ENCODE measurements at regions of chr6 and their contacts with region 1.

Region 1: DNA sequence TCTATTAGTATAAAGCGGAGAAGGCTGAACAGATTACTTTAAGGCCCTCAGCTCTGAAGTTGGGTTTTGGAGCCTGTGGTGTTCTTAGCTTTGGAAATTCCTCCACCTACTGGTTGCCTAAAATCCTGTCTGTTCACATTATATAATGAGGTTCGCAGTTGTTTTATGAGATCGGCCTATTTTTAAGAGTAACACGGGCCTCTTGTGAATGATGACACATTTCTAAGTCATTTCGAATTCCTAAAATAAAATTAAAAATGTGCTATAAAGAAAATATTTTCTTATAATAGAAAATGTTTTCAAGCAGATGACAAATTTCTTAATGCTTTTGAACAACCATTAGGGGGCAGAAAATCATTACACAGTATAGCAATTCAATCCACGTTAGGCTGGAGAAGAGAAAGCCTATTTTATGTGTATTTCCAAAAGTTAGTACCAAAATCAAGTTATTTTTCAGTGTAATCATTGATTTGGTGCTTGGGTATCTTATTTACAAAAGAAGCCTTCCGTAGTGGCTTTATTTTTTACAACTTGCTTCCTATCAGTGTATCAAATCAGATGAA is 15.8 kb upstream of the FAM8A1 start:
- DNase-seq: peak; percentile 37
- H3K4me3 ChIP-seq: no peak overlapping the region
- H3K27me3 ChIP-seq: no peaks in the 10 kb centered on the region
- CTCF ChIP-seq: peak; percentile 66

Region 2: GRCh38 chr6:17156112-17156921 is 428.0 kb before region 1 on chr6:
- CTCF ChIA-PET with region 1: interaction called, 17 read pairs
- POLR2A ChIA-PET with region 1: no interaction called
- DNase-seq: peak; percentile 39
- H3K4me3 ChIP-seq: no peak overlapping the region
- H3K27me3 ChIP-seq: no peaks in the 10 kb centered on the region
- CTCF ChIP-seq: peak; percentile 67

Region 3: DNA sequence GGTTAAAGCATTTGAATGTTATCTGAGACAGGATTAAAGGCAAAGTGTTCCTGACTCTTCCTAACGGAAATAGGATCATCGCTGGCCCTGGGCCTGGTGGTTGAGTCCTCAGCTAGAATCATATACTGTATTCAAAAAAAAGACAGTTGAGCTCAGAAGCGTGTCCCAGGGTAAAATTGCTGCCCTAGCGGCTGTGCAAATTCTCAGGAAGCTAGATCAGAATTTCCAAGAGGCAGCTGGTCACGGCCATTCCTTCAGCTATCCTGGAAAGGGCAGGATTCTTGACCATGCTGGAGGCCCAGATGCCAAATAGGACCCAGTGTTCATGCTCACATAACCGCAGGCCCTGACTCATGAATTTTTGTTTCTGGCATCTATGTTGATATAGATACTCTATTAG is 415.0 kb before region 1 on chr6:
- CTCF ChIA-PET with region 1: interaction called, 10 read pairs
- POLR2A ChIA-PET with region 1: no interaction called
- DNase-seq: no peak
- H3K4me3 ChIP-seq: no peak overlapping the region
- H3K27me3 ChIP-seq: no peaks in the 10 kb centered on the region
- CTCF ChIP-seq: no peak

Region 4: GRCh38 chr6:17446713-17447112 is 137.6 kb before region 1 on chr6:
- CTCF ChIA-PET with region 1: no interaction called
- POLR2A ChIA-PET with region 1: interaction called, 17 read pairs
- DNase-seq: no peak
- H3K4me3 ChIP-seq: no peak overlapping the region
- H3K27me3 ChIP-seq: no peaks in the 10 kb centered on the region
- CTCF ChIP-seq: no peak

Region 5: DNA sequence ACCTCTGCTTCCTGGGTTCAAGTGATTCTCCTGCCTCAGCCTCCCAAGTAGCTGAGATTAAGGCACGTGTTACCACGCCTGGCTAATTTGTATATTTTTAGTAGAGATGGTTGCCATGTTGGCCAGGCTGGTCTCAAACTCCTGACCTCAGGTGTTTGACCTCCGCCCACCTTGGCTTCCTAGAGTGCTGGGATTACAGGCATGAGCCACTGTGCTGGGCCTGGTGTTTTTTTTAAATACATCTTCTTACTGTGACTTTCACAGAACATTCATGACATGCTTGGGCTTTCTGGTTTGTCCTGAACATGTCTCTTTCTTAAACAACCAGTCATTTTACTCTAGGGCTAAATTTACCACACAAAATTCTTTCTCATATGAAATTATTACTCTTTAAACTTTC is 18.9 kb before region 1 on chr6:
- CTCF ChIA-PET with region 1: no interaction called
- POLR2A ChIA-PET with region 1: no interaction called
- DNase-seq: no peak
- H3K4me3 ChIP-seq: no peak overlapping the region
- H3K27me3 ChIP-seq: no peaks in the 10 kb centered on the region
- CTCF ChIP-seq: no peak

Region 6: DNA sequence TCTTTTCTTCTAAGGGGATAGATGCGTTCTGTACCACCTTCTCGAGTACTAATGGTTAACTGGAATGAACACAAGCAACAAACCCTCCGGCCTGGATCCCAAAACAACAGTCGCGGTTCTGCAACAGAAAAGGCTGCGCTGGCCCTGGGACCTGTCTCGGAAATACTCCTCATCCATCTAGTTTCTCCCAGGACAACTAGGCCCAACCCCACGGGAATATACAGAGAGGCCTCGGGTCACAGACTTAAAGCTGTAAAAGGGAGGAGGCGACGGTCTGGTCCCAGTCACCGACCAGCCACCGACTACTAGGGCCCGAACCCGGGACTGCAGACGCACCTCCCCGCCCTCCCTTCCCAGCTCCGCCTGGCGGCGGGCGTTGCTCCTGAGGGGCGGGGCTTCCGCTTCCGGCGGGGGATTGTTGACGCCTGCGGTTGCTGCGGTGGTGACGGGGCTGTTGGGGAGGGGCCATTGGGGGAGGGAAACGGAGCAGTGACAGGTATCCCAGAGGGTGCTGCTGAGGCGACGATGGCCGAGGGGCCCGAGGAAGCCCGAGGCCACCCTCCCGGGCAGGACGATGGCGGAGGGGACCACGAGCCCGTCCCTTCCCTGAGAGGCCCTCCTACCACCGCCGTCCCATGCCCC is 15.7 kb after region 1 on chr6 and contains the start of gene FAM8A1:
- CTCF ChIA-PET with region 1: interaction called, 14 read pairs
- POLR2A ChIA-PET with region 1: interaction called, 4 read pairs
- DNase-seq: peak; percentile 39
- H3K4me3 ChIP-seq: peak within 1 kb of the TSS; percentile 86
- H3K27me3 ChIP-seq: no peaks in the 10 kb centered on the region
- CTCF ChIP-seq: peak; percentile 87
- polyA plus RNA-seq, gene FAM8A1: 5.7 and 12.9 TPM in 2 replicates

Measured in BJ (cell line).